ENCODE measurements at regions of chr2 and their contacts with region 1.

Region 1: DNA sequence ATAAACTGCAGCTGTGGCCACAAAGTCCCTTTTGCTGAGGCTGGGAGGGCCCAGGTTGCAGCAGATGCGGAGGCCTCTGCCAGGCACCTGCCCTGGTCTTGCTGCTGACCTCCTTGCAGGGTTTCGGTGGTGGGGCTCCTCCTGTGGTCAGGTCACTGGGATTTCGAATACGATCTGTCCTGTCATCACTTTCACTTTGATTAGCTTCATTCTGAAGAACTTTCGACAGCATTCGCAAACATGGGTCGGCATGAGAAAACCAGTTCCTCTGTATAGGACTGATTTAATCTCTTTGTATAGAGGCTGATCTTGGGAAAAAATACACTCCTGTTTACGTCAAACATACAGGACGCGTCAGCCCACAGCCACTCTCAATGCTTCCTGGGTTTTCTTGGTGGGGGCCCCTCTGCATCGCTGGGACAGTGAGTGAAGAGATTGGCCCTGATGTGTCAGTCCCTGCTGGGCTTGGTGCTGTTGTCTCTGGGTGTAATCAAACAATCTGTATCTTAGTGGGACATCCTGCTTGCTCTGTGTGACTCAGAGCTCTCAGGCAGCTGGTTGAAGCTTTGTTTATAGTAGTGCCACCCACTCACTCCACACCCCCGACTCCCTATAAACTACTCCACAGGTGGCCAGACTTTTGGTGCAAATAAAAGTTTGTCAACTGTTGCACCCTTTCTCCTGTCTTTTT is 209.4 kb upstream of the CXCR4 start:
- H3K4me3 Mint-ChIP-seq: no peak overlapping the region
- H3K27ac Mint-ChIP-seq: peak overlapping the region; percentile 90
- H3K4me1 Mint-ChIP-seq: peaks cover 81% of the 10 kb centered on the region
- H3K27me3 Mint-ChIP-seq: no peaks in the 10 kb centered on the region

Region 2: GRCh38 chr2:136238286-136239078 is 88.8 kb before region 1 on chr2:
- intact Hi-C with region 1: loop called (anchors 5 kb)
- H3K4me3 Mint-ChIP-seq: peak overlapping the region; percentile 13
- H3K27ac Mint-ChIP-seq: peak overlapping the region; percentile 90
- H3K4me1 Mint-ChIP-seq: peaks cover 70% of the 10 kb centered on the region
- H3K27me3 Mint-ChIP-seq: no peaks in the 10 kb centered on the region

Region 3: GRCh38 chr2:136255648-136256463 is 71.5 kb before region 1 on chr2:
- intact Hi-C with region 1: loop called (anchors 5 kb)
- H3K4me3 Mint-ChIP-seq: no peak overlapping the region
- H3K27ac Mint-ChIP-seq: peak overlapping the region; percentile 79
- H3K4me1 Mint-ChIP-seq: peaks cover 48% of the 10 kb centered on the region
- H3K27me3 Mint-ChIP-seq: no peaks in the 10 kb centered on the region

Region 4: GRCh38 chr2:136362676-136363390 is 35.5 kb after region 1 on chr2:
- intact Hi-C with region 1: no loop called
- H3K4me3 Mint-ChIP-seq: no peak overlapping the region
- H3K27ac Mint-ChIP-seq: no peak overlapping the region
- H3K4me1 Mint-ChIP-seq: peaks cover 14% of the 10 kb centered on the region
- H3K27me3 Mint-ChIP-seq: no peaks in the 10 kb centered on the region